Natural killer cell (primary cell): ENCODE measurements at regions of chr1 and their contacts with region 1.

Region 1: DNA sequence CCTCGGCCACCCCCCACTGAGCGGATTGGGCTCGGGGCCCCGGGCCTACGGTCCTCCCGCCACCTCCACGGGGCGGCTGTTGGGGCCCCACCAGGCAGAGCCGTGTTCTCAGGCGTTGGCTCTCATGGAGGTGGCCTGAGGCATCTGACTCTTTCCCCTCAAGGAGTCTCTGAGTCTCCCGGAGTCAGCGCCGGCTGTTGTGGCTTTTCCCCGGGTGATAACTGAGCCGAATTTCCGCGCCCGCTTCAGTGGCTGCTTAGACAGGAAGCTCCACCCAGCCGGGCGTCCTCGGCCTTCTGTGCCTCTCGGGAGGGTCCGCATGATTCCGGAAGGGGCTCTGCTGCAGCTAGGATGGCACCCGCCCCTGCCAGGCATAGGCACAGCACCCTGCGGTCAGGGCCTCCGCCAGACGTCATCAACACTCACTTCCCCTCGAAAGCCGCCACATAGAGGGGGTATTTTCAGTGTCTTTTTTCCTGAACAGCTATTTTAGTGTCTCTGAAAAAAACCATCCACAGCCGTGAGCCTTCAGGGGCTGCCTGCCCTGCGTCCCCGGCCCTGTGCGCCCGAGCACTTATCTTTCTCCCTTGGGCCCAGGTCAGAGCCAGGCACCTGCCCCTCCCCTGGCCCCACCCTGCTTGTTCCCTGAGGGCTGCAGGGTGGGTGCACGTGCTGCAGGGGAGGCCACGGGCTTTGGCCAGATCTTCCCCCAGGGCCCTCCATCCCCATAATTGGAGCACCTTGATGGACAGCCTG is 72.9 kb downstream of the SKI start:
- DNase-seq: peak; percentile 87 to 98
- ATAC-seq: peak; percentile 65 to 87 (median 72)
- H3K4me3 ChIP-seq: peak overlapping the region; percentile 53
- H3K4me3 Mint-ChIP-seq: peak overlapping the region; percentile 81
- H3K27ac ChIP-seq: peak overlapping the region; percentile 98
- H3K27ac Mint-ChIP-seq: peak overlapping the region; percentile 95 to 96
- H3K4me1 ChIP-seq: peaks cover 74% of the 10 kb centered on the region
- H3K4me1 Mint-ChIP-seq: peaks cover 46 to 58% of the 10 kb centered on the region in 2 donors
- H3K27me3 ChIP-seq: no peaks in the 10 kb centered on the region
- H3K27me3 Mint-ChIP-seq: no peaks in the 10 kb centered on the region
- CTCF ChIP-seq: no peak

Region 2: GRCh38 chr1:2189459-2190425 is 111.3 kb before region 1 on chr1:
- intact Hi-C with region 1: no loop called
- DNase-seq: peak; percentile 74 to 92
- ATAC-seq: peak; percentile 92 to 94 (median 92)
- H3K4me3 ChIP-seq: peak overlapping the region; percentile 11
- H3K4me3 Mint-ChIP-seq: peak overlapping the region; percentile 83
- H3K27ac ChIP-seq: peak overlapping the region; percentile 74
- H3K27ac Mint-ChIP-seq: peak overlapping the region; percentile 70 to 91
- H3K4me1 ChIP-seq: peaks cover 26% of the 10 kb centered on the region
- H3K4me1 Mint-ChIP-seq: peaks cover 6% of the 10 kb centered on the region in 2 donors
- H3K27me3 ChIP-seq: no peaks in the 10 kb centered on the region
- H3K27me3 Mint-ChIP-seq: no peaks in the 10 kb centered on the region
- CTCF ChIP-seq: no peak

Region 3: DNA sequence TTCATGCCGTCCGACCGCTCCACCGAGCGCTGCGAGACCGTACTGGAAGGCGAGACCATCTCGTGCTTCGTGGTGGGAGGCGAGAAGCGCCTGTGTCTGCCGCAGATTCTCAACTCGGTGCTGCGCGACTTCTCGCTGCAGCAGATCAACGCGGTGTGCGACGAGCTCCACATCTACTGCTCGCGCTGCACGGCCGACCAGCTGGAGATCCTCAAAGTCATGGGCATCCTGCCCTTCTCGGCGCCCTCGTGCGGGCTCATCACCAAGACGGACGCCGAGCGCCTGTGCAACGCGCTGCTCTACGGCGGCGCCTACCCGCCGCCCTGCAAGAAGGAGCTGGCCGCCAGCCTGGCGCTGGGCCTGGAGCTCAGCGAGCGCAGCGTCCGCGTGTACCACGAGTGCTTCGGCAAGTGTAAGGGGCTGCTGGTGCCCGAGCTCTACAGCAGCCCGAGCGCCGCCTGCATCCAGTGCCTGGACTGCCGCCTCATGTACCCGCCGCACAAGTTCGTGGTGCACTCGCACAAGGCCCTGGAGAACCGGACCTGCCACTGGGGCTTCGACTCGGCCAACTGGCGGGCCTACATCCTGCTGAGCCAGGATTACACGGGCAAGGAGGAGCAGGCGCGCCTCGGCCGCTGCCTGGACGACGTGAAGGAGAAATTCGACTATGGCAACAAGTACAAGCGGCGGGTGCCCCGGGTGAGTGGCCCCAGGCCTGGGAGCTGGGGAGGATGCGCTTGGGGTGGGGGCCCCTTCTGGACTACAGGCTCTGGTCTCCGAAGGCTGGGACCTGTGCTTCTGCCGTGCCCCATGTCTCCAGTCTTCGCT is 71.8 kb before region 1 on chr1:
- intact Hi-C with region 1: loop called (anchors 2 kb)
- DNase-seq: peak; percentile 61 to 76
- ATAC-seq: peak; percentile 7 to 9 (median 8)
- H3K4me3 ChIP-seq: peak overlapping the region; percentile 58
- H3K4me3 Mint-ChIP-seq: peak overlapping the region; percentile 93
- H3K27ac ChIP-seq: peak overlapping the region; percentile 73
- H3K27ac Mint-ChIP-seq: peak overlapping the region; percentile 85 to 97
- H3K4me1 ChIP-seq: peaks cover 63% of the 10 kb centered on the region
- H3K4me1 Mint-ChIP-seq: peaks cover 38 to 60% of the 10 kb centered on the region in 2 donors
- H3K27me3 ChIP-seq: no peaks in the 10 kb centered on the region
- H3K27me3 Mint-ChIP-seq: peaks cover 0 to 2% of the 10 kb centered on the region in 2 donors
- CTCF ChIP-seq: no peak

Region 4: GRCh38 chr1:2255420-2256369 is 45.3 kb before region 1 on chr1:
- intact Hi-C with region 1: loop called (anchors 1 kb)
- DNase-seq: peak; percentile 79 to 96
- ATAC-seq: peak; percentile 71 to 87 (median 71)
- H3K4me3 ChIP-seq: no peak overlapping the region
- H3K4me3 Mint-ChIP-seq: no peak overlapping the region
- H3K27ac ChIP-seq: peak overlapping the region; percentile 98
- H3K27ac Mint-ChIP-seq: no peak overlapping the region
- H3K4me1 ChIP-seq: peaks cover 69% of the 10 kb centered on the region
- H3K4me1 Mint-ChIP-seq: peaks cover 31 to 33% of the 10 kb centered on the region in 2 donors
- H3K27me3 ChIP-seq: no peaks in the 10 kb centered on the region
- H3K27me3 Mint-ChIP-seq: no peaks in the 10 kb centered on the region
- CTCF ChIP-seq: no peak

Region 5: GRCh38 chr1:2290595-2291510 is 10.2 kb before region 1 on chr1:
- intact Hi-C with region 1: loop called (anchors 1 kb)
- DNase-seq: peak; percentile 69 to 89
- ATAC-seq: peak; percentile 77 to 88 (median 79)
- H3K4me3 ChIP-seq: peak overlapping the region; percentile 27
- H3K4me3 Mint-ChIP-seq: peak overlapping the region; percentile 92
- H3K27ac ChIP-seq: peak overlapping the region; percentile 81
- H3K27ac Mint-ChIP-seq: peak overlapping the region; percentile 95 to 97
- H3K4me1 ChIP-seq: peaks cover 72% of the 10 kb centered on the region
- H3K4me1 Mint-ChIP-seq: peaks cover 54 to 70% of the 10 kb centered on the region in 2 donors
- H3K27me3 ChIP-seq: no peaks in the 10 kb centered on the region
- H3K27me3 Mint-ChIP-seq: no peaks in the 10 kb centered on the region
- CTCF ChIP-seq: no peak

Region 6: DNA sequence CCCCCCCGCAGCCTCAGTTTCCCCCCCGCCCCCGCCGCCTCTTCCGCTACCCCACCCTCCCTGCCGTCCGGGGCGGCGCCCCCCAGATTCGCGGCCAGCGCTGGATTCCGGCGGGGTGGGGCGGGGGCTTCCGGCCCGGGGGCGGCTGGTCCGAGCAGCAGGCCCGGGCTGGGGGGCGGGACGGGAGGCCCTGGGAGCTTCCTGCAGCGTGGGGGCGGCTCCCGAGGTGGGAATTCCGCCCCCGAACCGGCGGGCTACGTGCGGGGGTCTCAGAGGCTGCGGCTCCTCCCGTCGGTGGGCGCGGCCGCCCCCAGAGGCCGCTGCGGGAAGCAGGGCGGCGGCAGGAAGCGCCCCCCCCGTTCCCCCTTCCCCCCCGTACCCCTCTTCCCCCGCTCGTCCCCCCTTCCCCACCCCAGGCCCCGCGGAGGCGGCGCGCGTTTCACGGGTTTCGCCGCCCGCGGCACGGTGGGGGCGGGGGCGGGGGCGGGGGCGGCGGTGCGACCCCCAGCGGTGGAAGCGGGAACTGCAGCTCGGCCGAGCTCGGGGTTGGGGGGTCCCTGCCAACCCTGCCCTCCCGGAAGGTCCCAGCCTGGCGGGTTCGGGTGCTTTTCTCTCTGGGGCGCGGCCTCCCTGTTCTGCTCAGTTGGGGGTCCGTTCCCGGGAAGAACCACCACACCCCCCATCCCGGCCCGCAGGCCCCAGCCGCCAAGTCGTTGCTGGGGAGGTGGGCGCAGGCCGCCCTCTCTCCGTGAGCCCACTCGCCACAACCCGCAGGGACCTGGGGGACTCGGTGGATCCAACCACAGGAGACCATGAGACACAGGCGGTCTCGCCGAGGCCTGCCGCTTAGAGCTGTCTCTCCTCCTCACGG is 14.0 kb after region 1 on chr1:
- intact Hi-C with region 1: loop called (anchors 2 kb)
- DNase-seq: peak; percentile 67 to 86
- ATAC-seq: peak; percentile 72 to 84 (median 78)
- H3K4me3 ChIP-seq: peak overlapping the region; percentile 47
- H3K4me3 Mint-ChIP-seq: peak overlapping the region; percentile 66
- H3K27ac ChIP-seq: peak overlapping the region; percentile 83
- H3K27ac Mint-ChIP-seq: peak overlapping the region; percentile 69 to 83
- H3K4me1 ChIP-seq: peaks cover 58% of the 10 kb centered on the region
- H3K4me1 Mint-ChIP-seq: peaks cover 0 to 22% of the 10 kb centered on the region in 2 donors
- H3K27me3 ChIP-seq: no peaks in the 10 kb centered on the region
- H3K27me3 Mint-ChIP-seq: no peaks in the 10 kb centered on the region
- CTCF ChIP-seq: peak; percentile 99

Region 7: DNA sequence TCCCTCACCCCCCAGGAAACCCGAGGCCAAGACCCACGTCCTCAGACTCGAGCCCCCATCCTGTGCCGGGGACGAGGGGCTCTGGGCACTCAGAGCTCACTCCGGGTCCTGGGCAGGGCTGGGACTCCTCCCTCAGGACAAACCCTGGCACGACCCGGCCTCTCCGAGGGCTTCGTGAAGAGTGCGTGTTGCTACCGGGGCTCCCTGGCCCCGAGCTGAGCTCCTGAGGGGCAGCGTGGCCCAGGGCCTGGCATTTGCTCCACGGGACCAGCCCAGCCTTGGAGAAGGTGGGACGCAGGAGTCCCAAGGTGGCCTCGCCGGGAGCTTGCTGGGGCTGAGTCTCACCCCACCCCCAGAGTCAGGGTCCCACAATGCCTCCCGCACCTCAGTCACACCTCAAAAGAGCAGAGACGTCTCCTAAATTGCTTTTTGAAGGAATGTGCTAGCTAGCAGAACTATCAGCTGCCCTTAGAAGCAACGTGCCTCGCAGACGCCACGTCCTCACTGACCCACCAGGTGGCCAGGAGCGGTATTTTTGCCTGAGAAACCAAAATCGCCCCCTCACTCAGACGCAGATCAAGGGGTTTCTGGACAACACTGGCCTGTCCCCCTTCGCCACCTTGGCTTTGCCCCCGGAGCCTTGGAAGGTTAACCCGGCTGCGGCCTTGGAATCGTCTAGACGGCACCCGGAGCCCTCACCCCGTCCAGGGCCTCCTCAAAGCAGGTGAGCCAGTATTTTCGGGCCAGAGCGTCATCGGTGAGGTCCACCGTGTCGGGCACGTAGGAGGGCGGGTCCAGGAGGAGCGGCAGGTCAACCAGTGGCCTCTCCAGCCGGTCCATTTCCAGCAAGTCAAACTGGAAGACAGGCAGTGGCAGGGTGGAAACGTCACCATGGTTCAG is 214.1 kb after region 1 on chr1:
- intact Hi-C with region 1: no loop called
- DNase-seq: no peak
- ATAC-seq: no peak
- H3K4me3 ChIP-seq: no peak overlapping the region
- H3K4me3 Mint-ChIP-seq: no peak overlapping the region
- H3K27ac ChIP-seq: no peak overlapping the region
- H3K27ac Mint-ChIP-seq: no peak overlapping the region
- H3K4me1 ChIP-seq: no peaks in the 10 kb centered on the region
- H3K4me1 Mint-ChIP-seq: no peaks in the 10 kb centered on the region
- H3K27me3 ChIP-seq: no peaks in the 10 kb centered on the region
- H3K27me3 Mint-ChIP-seq: no peaks in the 10 kb centered on the region
- CTCF ChIP-seq: no peak

Region 8: DNA sequence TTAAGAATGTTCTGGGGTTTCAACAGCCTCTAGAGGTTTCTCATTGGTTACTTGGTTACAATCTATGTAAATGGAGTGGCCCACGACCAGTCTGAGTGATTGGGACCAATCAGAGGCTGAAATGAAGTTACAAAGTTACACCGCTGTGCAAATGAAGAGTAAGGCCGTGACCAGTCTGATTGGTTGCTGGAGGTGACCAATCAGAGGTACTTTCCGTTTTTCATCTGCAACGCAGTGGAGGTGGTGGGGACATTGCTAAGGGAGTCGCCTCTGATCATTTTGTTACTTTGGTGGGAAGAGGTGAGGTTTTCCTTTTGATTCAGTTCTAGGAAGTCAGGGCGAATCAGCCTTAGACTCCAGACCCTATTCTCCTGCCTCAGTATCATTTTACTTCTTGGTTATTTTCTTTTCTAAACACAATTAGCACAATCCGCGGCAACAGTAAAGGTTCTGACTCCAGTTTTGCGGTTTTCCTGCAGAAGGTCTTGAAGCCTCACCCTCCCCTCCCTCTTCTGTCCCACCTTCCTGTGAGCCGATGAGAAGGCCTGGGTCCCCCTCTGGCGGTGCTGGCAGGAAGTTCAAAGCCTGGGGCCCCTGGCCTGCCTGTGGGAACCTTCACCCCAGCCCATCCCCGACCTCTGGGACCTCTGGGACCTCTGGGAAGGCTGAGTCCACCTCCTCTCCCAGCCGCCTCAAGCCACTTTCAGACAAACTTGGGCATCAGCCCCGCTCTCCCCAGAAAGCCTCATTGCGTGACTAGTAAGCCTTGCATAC is 539.2 kb after region 1 on chr1:
- intact Hi-C with region 1: no loop called
- DNase-seq: peak in 1 of 2 donors; percentile 85
- ATAC-seq: peak; percentile 65 to 87 (median 82)
- H3K4me3 ChIP-seq: no peak overlapping the region
- H3K4me3 Mint-ChIP-seq: peak overlapping the region; percentile 58
- H3K27ac ChIP-seq: peak overlapping the region; percentile 8
- H3K27ac Mint-ChIP-seq: peak overlapping the region; percentile 53 to 66
- H3K4me1 ChIP-seq: peaks cover 12% of the 10 kb centered on the region
- H3K4me1 Mint-ChIP-seq: peaks cover 21 to 22% of the 10 kb centered on the region in 2 donors
- H3K27me3 ChIP-seq: no peaks in the 10 kb centered on the region
- H3K27me3 Mint-ChIP-seq: peaks cover 12 to 19% of the 10 kb centered on the region in 2 donors
- CTCF ChIP-seq: peak; percentile 26